Endothelial cell of umbilical vein (primary cell): ENCODE measurements at regions of chr1 and their contacts with region 1.

Region 1: GRCh38 chr1:108767115-108767514 is 20.6 kb downstream of the STXBP3 start:
- DNase-seq: peak; percentile 82
- H3K4me3 ChIP-seq: no peak overlapping the region
- H3K27ac ChIP-seq: peak overlapping the region; percentile 4
- H3K4me1 ChIP-seq: peaks cover 13% of the 10 kb centered on the region
- H3K27me3 ChIP-seq: no peaks in the 10 kb centered on the region
- CTCF ChIP-seq: no peak
- POLR2A ChIP-seq: no peak

Region 2: DNA sequence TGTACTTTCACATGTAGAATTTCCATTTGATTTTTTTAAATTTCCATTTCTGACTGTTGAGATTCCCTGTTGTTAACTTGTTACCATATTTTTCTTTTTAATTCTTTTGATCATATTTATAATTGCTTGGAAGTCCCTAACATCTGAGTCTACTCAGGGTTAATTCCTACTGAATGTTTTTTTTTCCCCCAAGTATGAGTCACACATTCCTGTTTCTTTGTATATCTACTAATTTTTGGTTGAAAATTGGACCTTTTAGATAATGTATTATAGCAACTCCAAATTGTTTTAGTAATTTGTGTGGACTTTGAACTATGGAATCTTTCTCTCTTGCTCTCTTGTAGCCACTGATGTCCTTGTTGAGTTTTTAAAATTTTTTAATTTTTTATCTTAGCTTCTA is 34.0 kb after region 1 on chr1:
- CTCF ChIA-PET with region 1: no interaction called
- POLR2A ChIA-PET with region 1: no interaction called
- dilution Hi-C with region 1: no loop called
- intact Hi-C with region 1: loop called (anchors 2 kb)
- DNase-seq: peak; percentile 46
- H3K4me3 ChIP-seq: no peak overlapping the region
- H3K27ac ChIP-seq: peak overlapping the region; percentile 10
- H3K4me1 ChIP-seq: peaks cover 16% of the 10 kb centered on the region
- H3K27me3 ChIP-seq: no peaks in the 10 kb centered on the region
- CTCF ChIP-seq: no peak
- POLR2A ChIP-seq: no peak